ENCODE measurements at regions of chr7 and their contacts with region 1.

Region 1: DNA sequence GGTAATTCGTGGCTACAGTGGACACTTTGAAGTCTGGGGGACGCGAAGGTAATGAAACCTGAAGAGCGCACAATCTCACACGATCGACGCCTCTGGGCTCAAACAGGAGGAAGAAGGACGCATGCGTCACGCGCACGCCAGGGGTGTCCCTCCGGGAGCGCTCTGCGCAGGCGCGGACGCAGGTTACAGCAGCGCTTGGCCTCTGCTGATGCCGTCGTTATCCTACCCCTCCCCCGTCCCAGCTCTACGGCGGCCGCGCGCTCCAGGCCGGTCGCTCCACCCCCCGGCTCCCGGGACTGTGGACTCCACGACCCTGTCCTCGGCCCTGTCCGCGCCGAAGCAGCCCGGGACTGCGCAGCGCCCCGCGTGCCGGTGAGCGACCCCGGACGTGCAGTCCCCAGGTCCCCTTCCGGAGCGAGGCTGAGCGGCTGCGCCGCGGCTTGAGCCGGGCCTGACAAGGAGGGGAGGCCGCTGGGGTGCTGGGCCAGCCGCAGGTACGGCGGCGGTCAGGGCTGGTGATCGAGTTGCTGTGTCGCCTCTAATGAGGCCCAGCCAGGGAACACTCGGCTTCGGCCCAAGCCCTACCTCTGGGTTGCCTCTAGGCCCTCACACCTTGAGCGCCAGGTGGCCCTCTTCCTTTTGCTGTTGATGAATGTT is at the start of gene TMEM106B:
- DNase-seq: peak; percentile 92 to 99 (median 97)
- ATAC-seq: peak; percentile 87
- H3K4me3 ChIP-seq: peak within 1 kb of the TSS; percentile 72 to 83
- H3K4me3 Mint-ChIP-seq: peak within 1 kb of the TSS; percentile 98
- H3K27ac ChIP-seq: peak within 1 kb of the TSS; percentile 94 to 95
- H3K27ac Mint-ChIP-seq: peak within 1 kb of the TSS; percentile 99
- H3K4me1 ChIP-seq: peaks cover 29% of the 10 kb centered on the region
- H3K4me1 Mint-ChIP-seq: peaks cover 40% of the 10 kb centered on the region
- H3K27me3 ChIP-seq: no peaks in the 10 kb centered on the region
- H3K27me3 Mint-ChIP-seq: no peaks in the 10 kb centered on the region
- CTCF ChIP-seq: peak; percentile 19
- total RNA-seq, gene TMEM106B: 15.0 to 17.3 TPM

Region 2: DNA sequence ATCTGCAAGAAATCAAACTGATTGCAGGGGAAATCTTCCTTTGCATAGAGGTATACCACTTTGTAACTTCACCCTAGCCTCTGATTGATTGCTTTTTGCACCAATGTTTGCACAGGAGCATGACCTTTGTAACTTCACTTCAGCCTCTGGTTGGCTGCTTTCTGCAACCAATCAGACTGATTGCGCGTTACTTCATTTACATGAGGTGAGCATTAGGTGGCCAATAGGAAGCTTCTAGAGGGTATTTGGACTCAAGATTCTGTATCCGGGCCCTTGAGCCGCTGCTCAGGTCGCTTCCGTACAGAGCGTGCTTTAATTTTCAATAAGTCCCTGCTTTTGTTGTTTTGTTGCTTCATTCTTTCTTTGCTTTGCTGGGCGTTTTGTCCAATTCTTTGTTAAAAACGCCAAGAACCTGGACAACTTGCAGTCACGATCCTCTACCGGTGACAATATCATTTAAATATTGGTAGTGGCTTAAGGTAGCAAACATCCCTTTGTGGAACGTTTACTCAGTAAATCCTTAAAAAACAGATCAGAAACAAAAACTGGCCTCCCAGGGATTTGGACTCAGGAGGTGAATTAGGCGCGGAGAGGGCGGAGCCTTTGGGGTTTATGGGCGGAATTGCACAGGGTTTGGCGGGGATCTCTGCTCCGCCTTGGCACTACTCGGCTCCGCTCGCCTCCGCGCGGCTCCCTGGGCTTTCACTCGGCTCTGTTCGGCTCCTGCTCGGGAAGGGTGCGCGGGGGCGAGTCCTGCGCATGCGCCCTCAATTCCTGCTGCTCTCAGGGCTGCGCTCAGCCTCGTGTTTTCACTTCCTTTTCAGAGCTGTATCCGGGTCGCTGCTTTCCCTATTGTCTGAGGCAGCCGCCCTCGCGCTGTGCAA is 1237.9 kb before region 1 on chr7 and contains the start of gene PHF14:
- CTCF ChIA-PET with region 1: no interaction called
- POLR2A ChIA-PET with region 1: no interaction called
- intact Hi-C with region 1: loop called in 1 of 2 experiments (anchors 5 kb)
- DNase-seq: peak; percentile 89 to 98 (median 94)
- ATAC-seq: peak; percentile 97
- H3K4me3 ChIP-seq: peak within 1 kb of the TSS; percentile 67 to 72
- H3K4me3 Mint-ChIP-seq: peak within 1 kb of the TSS; percentile 95
- H3K27ac ChIP-seq: peak within 1 kb of the TSS; percentile 75
- H3K27ac Mint-ChIP-seq: peak within 1 kb of the TSS; percentile 97
- H3K4me1 ChIP-seq: peaks cover 25% of the 10 kb centered on the region
- H3K4me1 Mint-ChIP-seq: peaks cover 45% of the 10 kb centered on the region
- H3K27me3 ChIP-seq: peaks cover 0 to 2% of the 10 kb centered on the region in 2 experiments
- H3K27me3 Mint-ChIP-seq: peaks cover 14% of the 10 kb centered on the region
- CTCF ChIP-seq: no peak
- total RNA-seq, gene PHF14: 18.0 to 18.3 TPM

Region 3: DNA sequence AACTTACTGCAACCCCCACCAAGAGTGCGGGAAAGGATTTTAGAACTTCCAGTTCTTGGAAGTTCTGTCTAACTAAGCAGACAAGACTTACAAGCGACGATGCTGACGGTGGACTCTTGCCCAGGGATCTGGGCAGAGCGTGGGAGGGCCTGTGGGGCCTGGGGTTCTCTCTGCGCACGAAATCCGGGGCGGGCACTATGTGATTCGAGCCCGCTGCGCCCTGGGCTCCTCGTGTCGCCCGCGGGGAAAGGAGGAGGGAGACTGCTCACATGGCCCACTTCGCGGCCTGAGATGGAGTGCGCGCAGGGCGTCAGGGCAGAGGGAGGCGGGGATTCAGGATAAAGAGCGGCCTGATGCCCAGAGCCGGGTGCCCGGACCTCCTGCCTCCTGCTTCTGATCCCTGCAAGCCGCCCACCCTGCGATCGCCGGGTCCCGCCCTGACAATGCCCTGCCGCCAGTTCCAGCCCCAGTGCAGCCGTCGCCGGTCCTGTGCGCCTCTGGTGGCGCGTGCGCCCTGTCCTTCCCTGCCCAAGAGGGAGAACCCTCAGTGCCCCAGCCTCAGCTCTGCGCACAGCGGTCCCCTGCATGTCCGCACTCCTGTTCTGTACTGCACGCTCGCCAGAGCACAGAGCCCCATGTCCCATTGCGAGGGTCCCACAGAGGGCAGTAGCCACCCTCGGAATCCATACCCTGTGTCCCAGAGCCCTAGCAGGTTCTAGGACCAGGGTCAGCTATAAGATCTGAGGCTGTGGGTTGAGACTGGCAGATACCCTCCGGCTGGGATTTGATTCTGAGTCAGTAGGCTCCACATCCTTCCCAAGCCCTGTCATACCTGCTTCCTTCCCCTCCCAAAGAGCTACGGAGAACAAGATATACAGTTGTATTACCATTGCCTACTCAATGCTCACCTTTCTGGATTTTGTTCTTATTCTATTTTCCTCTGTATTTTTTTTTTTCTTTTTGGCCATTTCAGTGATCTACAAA is 99.5 kb before region 1 on chr7:
- CTCF ChIA-PET with region 1: interaction called, 4 read pairs
- POLR2A ChIA-PET with region 1: no interaction called
- intact Hi-C with region 1: loop called in 1 of 2 experiments (anchors 2 kb)
- DNase-seq: peak in 4 of 9 experiments; percentile 15 to 55 (median 30)
- ATAC-seq: peak; percentile 46
- H3K4me3 ChIP-seq: peak overlapping the region; percentile 10 to 45
- H3K4me3 Mint-ChIP-seq: peak overlapping the region; percentile 75
- H3K27ac ChIP-seq: no peak overlapping the region
- H3K27ac Mint-ChIP-seq: no peak overlapping the region
- H3K4me1 ChIP-seq: peaks cover 10% of the 10 kb centered on the region
- H3K4me1 Mint-ChIP-seq: peaks cover 11% of the 10 kb centered on the region
- H3K27me3 ChIP-seq: peaks cover 5 to 7% of the 10 kb centered on the region in 2 experiments
- H3K27me3 Mint-ChIP-seq: peaks cover 35% of the 10 kb centered on the region
- CTCF ChIP-seq: no peak

Region 4: DNA sequence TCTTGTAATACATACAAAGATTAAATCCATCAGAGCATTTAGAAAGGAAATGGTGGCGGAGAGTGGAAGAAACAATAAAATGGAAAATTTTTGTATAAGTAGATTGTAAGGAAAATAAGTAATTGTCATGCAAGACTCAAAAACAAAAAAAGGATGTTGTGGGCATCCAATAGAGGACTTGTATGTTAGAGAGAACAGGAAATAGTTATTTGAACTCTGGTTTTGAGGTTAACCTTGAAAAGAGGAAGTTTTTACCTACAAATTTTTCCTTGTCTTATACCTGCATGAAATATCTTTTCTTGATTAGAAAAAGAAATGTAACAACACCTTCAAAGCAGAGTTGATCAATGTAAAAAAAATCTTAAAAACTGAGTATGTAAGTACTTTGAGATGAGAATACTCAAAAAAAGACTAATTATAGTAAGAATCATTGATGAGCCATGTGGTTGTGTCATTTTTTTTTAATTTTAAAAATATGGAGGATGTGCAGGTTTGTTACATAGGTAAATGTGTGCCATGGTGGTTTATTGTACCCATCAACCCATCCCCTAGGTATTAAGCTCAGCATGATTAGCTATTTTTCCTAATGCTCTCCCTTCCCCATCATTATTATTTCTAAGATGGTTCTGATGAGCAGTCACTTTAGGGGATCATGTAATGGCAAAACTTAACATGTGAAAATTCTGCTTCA is 11.9 kb after region 1 on chr7:
- CTCF ChIA-PET with region 1: interaction called, 6 read pairs
- POLR2A ChIA-PET with region 1: interaction called, 7 read pairs
- intact Hi-C with region 1: loop called in 1 of 2 experiments (anchors 1 kb)
- DNase-seq: peak in 2 of 9 experiments; percentile 33 to 62
- ATAC-seq: peak; percentile 63
- H3K4me3 ChIP-seq: no peak overlapping the region
- H3K4me3 Mint-ChIP-seq: peak overlapping the region; percentile 59
- H3K27ac ChIP-seq: peak overlapping the region in 1 of 2 experiments; percentile 38
- H3K27ac Mint-ChIP-seq: peak overlapping the region; percentile 78
- H3K4me1 ChIP-seq: peaks cover 34% of the 10 kb centered on the region
- H3K4me1 Mint-ChIP-seq: peaks cover 52% of the 10 kb centered on the region
- H3K27me3 ChIP-seq: no peaks in the 10 kb centered on the region
- H3K27me3 Mint-ChIP-seq: no peaks in the 10 kb centered on the region
- CTCF ChIP-seq: no peak

Region 5: DNA sequence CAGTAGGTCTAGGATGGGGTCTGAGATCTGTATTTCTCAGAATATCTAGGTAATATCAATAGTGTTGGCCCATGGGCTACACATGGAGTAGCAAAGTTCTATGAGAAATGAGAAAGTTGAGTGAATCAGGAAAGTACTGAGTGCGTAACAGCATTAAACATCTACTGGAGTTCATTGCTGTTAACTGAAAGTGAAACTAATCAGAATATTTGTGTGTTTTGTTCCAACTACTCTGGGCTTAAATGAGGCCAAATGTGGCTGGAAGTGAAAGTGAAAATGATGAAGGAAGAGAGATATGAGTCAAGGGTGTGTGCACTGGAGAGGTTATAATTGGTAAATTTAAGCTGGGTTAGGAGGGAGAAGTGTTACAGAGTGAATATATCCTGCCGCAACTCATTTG is 46.4 kb after region 1 on chr7:
- CTCF ChIA-PET with region 1: interaction called, 3 read pairs
- POLR2A ChIA-PET with region 1: interaction called, 14 read pairs
- intact Hi-C with region 1: loop called (anchors 1 to 2 kb)
- DNase-seq: peak in 2 of 9 experiments; percentile 76 to 86
- ATAC-seq: peak; percentile 96
- H3K4me3 ChIP-seq: peak overlapping the region; percentile 5 to 38
- H3K4me3 Mint-ChIP-seq: no peak overlapping the region
- H3K27ac ChIP-seq: peak overlapping the region; percentile 13 to 79
- H3K27ac Mint-ChIP-seq: no peak overlapping the region
- H3K4me1 ChIP-seq: peaks cover 19% of the 10 kb centered on the region
- H3K4me1 Mint-ChIP-seq: peaks cover 6% of the 10 kb centered on the region
- H3K27me3 ChIP-seq: no peaks in the 10 kb centered on the region
- H3K27me3 Mint-ChIP-seq: no peaks in the 10 kb centered on the region
- CTCF ChIP-seq: no peak

Region 6: DNA sequence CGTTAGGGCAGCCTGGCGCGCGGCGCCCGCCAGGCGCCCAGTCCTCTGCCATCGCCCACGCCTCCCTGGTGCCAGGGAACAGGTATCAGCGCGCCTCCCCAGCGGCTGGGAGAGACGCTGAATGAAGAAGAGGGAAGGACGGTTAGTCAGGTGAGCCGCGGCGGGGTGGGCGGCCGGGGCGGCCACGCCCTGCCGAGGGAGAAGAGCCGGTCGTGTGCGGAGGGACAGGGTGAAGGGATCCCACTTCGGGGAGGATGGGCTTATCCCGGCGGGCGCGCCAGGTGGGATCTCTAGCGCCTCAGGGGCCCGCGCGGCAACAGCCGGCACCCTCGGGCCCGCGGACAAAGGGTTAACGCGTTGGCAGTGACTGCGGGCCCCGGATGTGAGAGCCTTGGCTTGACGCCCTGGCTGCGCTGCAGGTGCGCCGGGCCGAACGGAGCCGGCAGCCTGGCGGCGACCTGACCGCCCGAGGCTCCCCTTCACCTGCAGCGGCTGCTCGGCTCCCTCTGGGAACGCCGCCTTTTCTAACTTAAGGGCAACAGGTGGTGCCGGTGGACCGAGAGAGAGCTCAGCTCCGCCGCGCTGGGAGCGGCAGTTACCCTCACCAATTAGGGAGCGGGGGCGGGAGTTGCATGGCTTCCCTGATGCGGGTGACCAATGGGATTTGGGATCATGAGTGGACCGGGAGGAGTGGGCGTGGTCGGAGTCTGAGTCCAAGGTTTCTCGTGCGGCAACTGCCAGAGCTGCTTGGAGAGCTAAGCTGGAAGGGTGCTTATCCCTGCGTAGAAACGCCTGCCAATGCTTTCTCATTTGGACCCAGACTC is 475.9 kb after region 1 on chr7 and contains the start of gene ARL4A:
- CTCF ChIA-PET with region 1: no interaction called
- POLR2A ChIA-PET with region 1: no interaction called
- intact Hi-C with region 1: loop called (anchors 1 to 5 kb)
- DNase-seq: peak; percentile 70 to 94 (median 87)
- ATAC-seq: peak; percentile 41
- H3K4me3 ChIP-seq: peak within 1 kb of the TSS; percentile 94
- H3K4me3 Mint-ChIP-seq: peak within 1 kb of the TSS; percentile 92
- H3K27ac ChIP-seq: peak within 1 kb of the TSS; percentile 97 to 99
- H3K27ac Mint-ChIP-seq: peak within 1 kb of the TSS; percentile 93
- H3K4me1 ChIP-seq: no peaks in the 10 kb centered on the region
- H3K4me1 Mint-ChIP-seq: peaks cover 27% of the 10 kb centered on the region
- H3K27me3 ChIP-seq: no peaks in the 10 kb centered on the region
- H3K27me3 Mint-ChIP-seq: no peaks in the 10 kb centered on the region
- CTCF ChIP-seq: peak; percentile 44
- total RNA-seq, gene ARL4A: 48.6 to 56.2 TPM

Region 7: GRCh38 chr7:12907774-12908173 is 696.6 kb after region 1 on chr7:
- CTCF ChIA-PET with region 1: no interaction called
- POLR2A ChIA-PET with region 1: no interaction called
- intact Hi-C with region 1: no loop called
- DNase-seq: no peak
- ATAC-seq: no peak
- H3K4me3 ChIP-seq: no peak overlapping the region
- H3K4me3 Mint-ChIP-seq: no peak overlapping the region
- H3K27ac ChIP-seq: no peak overlapping the region
- H3K27ac Mint-ChIP-seq: no peak overlapping the region
- H3K4me1 ChIP-seq: no peaks in the 10 kb centered on the region
- H3K4me1 Mint-ChIP-seq: no peaks in the 10 kb centered on the region
- H3K27me3 ChIP-seq: no peaks in the 10 kb centered on the region
- H3K27me3 Mint-ChIP-seq: no peaks in the 10 kb centered on the region
- CTCF ChIP-seq: no peak

Measured in CD8-positive, alpha-beta T cell (primary cell).